ENCODE measurements at regions of chr2 and their contacts with region 1.

Region 1: GRCh38 chr2:128178650-128179460 is 87.9 kb downstream of the UGGT1 start:
- DNase-seq: peak; percentile 49 to 75 (median 68)
- ATAC-seq: peak; percentile 96
- H3K4me3 ChIP-seq: no peak overlapping the region
- H3K27ac ChIP-seq: no peak overlapping the region
- H3K4me1 ChIP-seq: no peaks in the 10 kb centered on the region; a peak in 1 of 5 replicates
- H3K27me3 ChIP-seq: no peaks in the 10 kb centered on the region
- CTCF ChIP-seq: peak; percentile 70 to 87 (median 86)
- EP300 ChIP-seq: no peak
- POLR2A ChIP-seq: no peak
- RAD21 ChIP-seq: peak; percentile 72 to 78

Region 2: DNA sequence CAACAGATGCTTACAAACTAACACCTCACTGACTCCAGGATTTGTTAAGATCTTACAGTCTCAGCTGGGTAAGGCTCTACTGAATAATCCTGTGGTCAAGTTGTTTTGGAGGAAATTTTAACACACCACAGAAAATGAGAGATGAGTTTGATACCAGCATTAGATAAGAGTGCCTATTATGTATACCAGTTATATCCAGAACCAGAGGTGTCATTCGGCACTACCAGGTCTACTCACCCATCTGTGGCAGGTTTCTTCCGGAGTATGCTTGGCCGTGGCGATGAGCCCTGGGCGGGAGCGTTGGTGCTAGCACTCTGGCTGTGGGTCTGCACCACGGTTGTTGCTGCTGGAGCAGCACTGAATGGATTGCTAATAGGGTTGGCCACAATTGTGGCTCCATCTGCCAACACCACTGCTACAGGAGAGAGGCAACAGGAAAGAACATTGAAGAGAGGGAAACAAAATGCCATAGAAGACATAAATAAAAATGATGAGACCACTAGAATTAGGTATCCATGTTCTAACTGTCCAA is 192.2 kb before region 1 on chr2:
- CTCF ChIA-PET with region 1: no interaction called
- POLR2A ChIA-PET with region 1: no interaction called
- in situ Hi-C with region 1: no loop called
- intact Hi-C with region 1: no loop called
- DNase-seq: no peak
- ATAC-seq: no peak
- H3K4me3 ChIP-seq: no peak overlapping the region
- H3K27ac ChIP-seq: no peak overlapping the region
- H3K4me1 ChIP-seq: no peaks in the 10 kb centered on the region
- H3K27me3 ChIP-seq: no peaks in the 10 kb centered on the region
- CTCF ChIP-seq: no peak
- EP300 ChIP-seq: no peak
- POLR2A ChIP-seq: no peak
- RAD21 ChIP-seq: no peak

Region 3: DNA sequence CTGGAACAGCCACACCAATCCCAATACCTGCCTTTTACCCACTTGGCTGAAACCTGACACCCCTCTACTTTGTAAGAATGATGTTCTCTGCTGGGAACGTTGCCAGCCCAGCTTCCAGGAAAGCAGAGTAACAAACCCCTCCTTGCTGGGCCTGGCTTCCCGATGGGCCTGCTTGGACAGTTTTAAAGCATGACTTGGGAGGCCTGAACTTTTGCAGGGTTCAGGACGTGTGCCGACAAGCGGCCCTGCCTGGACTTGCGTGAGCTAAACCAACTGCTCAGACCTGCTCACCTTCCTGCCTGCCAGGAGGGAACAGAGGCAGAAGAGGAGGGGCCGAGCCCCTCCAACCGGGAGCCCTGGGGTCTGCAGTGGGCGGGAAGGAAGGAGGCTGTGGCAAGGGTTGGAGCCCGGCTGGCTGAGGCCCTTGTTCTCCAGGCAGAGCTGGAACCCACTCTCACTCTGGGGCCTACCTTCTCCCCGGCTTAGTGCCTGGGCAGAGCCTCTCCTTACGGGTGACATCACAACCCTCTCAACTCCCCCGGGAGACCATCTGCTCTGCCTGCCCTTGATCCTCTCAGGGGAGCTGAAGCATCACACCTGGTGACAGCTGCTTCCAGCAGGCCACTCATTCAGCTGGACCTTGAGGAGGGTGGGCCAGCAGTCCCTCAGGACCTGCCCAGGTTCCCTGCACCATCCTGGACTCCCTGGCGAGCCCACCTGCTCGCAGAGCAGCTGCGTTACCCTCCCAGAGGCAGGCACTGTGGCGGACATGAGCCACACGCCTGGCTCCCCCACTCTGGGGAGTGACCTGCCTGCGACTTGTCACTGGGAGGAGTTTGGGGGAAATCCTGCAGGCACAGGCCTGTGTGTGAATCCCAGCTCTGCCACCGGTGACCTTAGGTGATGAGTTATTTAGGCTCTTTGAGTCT is 126.6 kb after region 1 on chr2:
- CTCF ChIA-PET with region 1: interaction called, 3 read pairs
- POLR2A ChIA-PET with region 1: no interaction called
- in situ Hi-C with region 1: no loop called
- intact Hi-C with region 1: loop called (anchors 5 kb)
- DNase-seq: peak in 3 of 4 experiments; percentile 42 to 86 (median 75)
- ATAC-seq: peak; percentile 73
- H3K4me3 ChIP-seq: no peak overlapping the region
- H3K27ac ChIP-seq: no peak overlapping the region
- H3K4me1 ChIP-seq: peaks cover 29 to 67% of the 10 kb centered on the region in 2 experiments
- H3K27me3 ChIP-seq: no peaks in the 10 kb centered on the region
- CTCF ChIP-seq: peak in 1 of 3 experiments; percentile 6; a peak in 1 of 6 replicates
- EP300 ChIP-seq: no peak
- POLR2A ChIP-seq: no peak
- RAD21 ChIP-seq: no peak

Region 4: GRCh38 chr2:128325611-128326181 is 146.8 kb after region 1 on chr2:
- CTCF ChIA-PET with region 1: no interaction called
- POLR2A ChIA-PET with region 1: no interaction called
- in situ Hi-C with region 1: no loop called
- intact Hi-C with region 1: no loop called
- DNase-seq: no peak
- ATAC-seq: no peak
- H3K4me3 ChIP-seq: no peak overlapping the region
- H3K27ac ChIP-seq: no peak overlapping the region
- H3K4me1 ChIP-seq: peaks cover 0 to 34% of the 10 kb centered on the region in 2 experiments; a peak in 3 of 5 replicates
- H3K27me3 ChIP-seq: peaks cover 0 to 28% of the 10 kb centered on the region in 2 experiments; a peak in 3 of 5 replicates
- CTCF ChIP-seq: no peak
- EP300 ChIP-seq: no peak
- POLR2A ChIP-seq: no peak
- RAD21 ChIP-seq: no peak

Region 5: GRCh38 chr2:128413718-128414341 is 235.0 kb after region 1 on chr2:
- CTCF ChIA-PET with region 1: no interaction called
- POLR2A ChIA-PET with region 1: no interaction called
- in situ Hi-C with region 1: no loop called
- intact Hi-C with region 1: loop called (anchors 10 kb)
- DNase-seq: no peak
- ATAC-seq: no peak
- H3K4me3 ChIP-seq: no peak overlapping the region
- H3K27ac ChIP-seq: no peak overlapping the region
- H3K4me1 ChIP-seq: no peaks in the 10 kb centered on the region; a peak in 2 of 5 replicates
- H3K27me3 ChIP-seq: peaks cover 0 to 39% of the 10 kb centered on the region in 2 experiments; a peak in 4 of 5 replicates
- CTCF ChIP-seq: no peak
- EP300 ChIP-seq: no peak
- POLR2A ChIP-seq: no peak
- RAD21 ChIP-seq: no peak